ENCODE measurements at regions of chr6 and their contacts with region 1.

Region 1: GRCh38 chr6:148868314-148868713 is 121.5 kb downstream of the UST start:
- DNase-seq: no peak
- H3K4me3 Mint-ChIP-seq: peak overlapping the region; percentile 23
- H3K27ac Mint-ChIP-seq: peak overlapping the region; percentile 88
- H3K4me1 Mint-ChIP-seq: peaks cover 55% of the 10 kb centered on the region
- H3K27me3 Mint-ChIP-seq: no peaks in the 10 kb centered on the region

Region 2: GRCh38 chr6:148830614-148831013 is 37.7 kb before region 1 on chr6:
- CTCF ChIA-PET with region 1: no interaction called
- POLR2A ChIA-PET with region 1: no interaction called
- intact Hi-C with region 1: loop called (anchors 1 kb)
- DNase-seq: peak; percentile 28
- H3K4me3 Mint-ChIP-seq: peak overlapping the region; percentile 71
- H3K27ac Mint-ChIP-seq: peak overlapping the region; percentile 26
- H3K4me1 Mint-ChIP-seq: peaks cover 44% of the 10 kb centered on the region
- H3K27me3 Mint-ChIP-seq: peaks cover 5% of the 10 kb centered on the region

Region 3: DNA sequence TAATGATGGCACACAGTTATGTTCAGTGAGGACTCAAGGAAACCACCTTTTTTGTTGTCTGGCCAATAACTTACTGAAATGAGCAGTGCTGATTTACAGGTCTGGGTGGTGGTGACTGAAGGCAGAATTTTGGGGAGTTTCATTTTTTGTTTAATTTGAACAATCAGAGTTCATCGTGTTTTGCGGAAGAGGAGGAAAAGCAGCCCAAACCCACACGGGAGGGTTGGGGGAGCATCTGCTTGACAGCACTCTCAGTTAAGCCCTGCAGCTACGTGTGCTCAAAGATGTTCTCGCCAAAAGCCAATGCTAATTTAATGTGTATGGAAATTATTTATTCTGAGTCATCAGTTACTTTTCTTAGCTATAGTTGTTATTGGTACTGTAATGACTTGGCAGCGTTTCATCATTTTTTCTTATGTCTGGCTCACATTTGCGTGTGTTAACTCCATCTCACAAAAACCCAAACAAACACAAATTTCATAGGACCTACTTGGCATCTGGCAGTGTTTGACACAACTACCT is 32.3 kb before region 1 on chr6:
- CTCF ChIA-PET with region 1: no interaction called
- POLR2A ChIA-PET with region 1: no interaction called
- intact Hi-C with region 1: loop called (anchors 1 kb)
- DNase-seq: peak; percentile 71
- H3K4me3 Mint-ChIP-seq: peak overlapping the region; percentile 36
- H3K27ac Mint-ChIP-seq: peak overlapping the region; percentile 79
- H3K4me1 Mint-ChIP-seq: peaks cover 49% of the 10 kb centered on the region
- H3K27me3 Mint-ChIP-seq: peaks cover 5% of the 10 kb centered on the region

Region 4: DNA sequence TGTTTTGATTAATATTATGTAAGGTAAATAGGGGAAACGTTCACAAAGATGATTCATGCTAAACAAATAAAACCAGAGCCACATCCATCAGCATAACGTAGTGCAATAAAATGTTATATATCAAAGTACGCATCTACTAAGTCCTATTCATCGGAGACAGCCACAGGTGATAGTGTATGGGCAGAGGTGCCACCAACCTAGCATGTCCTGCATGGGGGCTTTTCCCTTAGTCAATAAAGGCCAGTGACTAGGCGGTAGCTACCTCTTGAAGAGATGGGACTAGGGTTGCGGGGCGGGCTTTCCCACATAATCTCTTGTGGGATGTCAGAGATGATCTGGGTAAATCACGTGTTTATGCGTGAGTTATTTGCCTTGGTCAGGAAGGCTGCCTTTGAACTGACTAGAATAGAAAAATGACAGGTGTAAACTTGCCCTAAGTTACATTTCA is 12.0 kb before region 1 on chr6:
- CTCF ChIA-PET with region 1: no interaction called
- POLR2A ChIA-PET with region 1: interaction called, 3 read pairs
- intact Hi-C with region 1: loop called (anchors 1 kb)
- DNase-seq: no peak
- H3K4me3 Mint-ChIP-seq: no peak overlapping the region
- H3K27ac Mint-ChIP-seq: no peak overlapping the region
- H3K4me1 Mint-ChIP-seq: peaks cover 24% of the 10 kb centered on the region
- H3K27me3 Mint-ChIP-seq: no peaks in the 10 kb centered on the region

Measured in activated CD4-positive, alpha-beta memory T cell treated with anti-CD3 and anti-CD28 coated beads for 36 hours (primary cell).